Calu3 (cell line): ENCODE measurements at regions of chr10 and their contacts with region 1.

Region 1: DNA sequence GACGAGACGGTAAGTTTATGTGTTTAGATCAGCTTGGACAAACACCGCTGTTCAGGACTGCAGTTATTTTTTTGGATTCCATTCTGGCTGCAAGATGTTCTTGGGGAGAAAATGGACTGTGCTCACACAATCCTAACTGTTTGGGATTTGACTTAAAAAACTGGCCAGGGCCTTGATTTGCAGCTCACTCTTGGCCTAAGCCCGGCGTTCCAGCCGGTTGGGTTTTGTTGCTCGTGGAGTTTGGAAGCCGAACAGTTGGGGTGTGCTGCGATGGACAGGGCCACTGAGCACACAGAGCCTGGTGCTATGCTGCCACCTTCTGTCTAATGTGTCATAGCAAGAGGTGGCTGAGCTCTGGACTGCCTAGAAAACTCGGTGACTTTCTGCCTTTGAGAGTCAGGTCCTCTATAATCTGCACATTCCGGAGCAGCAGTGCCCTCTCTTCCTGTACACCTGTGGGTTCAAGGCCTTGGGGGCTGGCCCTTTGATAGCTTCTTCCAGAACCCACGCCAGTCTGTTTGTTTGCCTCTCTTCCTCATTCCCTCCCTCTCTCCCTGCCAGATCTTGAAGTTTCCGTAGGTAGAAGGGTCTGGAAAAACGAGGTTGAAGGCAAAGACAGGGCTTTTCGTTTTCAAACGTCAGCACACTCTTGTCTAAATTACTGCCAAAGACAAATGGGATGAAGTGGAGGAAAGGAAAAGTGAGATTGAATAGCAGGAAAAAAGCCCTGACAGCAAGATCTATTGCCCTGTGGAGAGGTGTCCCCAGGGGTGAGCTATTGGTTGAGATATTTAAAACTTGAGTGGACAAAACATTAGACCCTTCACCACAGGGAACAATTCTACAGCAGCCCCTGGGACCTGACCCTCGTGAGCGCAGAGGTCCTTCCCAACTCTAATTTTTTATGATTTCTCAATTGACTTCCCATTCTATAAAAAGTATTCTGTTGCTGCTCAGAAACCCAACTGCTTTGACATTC is 167.5 kb upstream of the HABP2 start:
- DNase-seq: peak; percentile 66
- H3K4me3 Mint-ChIP-seq: no peak overlapping the region
- H3K27ac Mint-ChIP-seq: no peak overlapping the region
- H3K4me1 Mint-ChIP-seq: peaks cover 16% of the 10 kb centered on the region
- H3K27me3 Mint-ChIP-seq: peaks cover 12% of the 10 kb centered on the region
- CTCF ChIP-seq: peak; percentile 61

Region 2: GRCh38 chr10:112471878-112472487 is 913.3 kb before region 1 on chr10:
- CTCF ChIA-PET with region 1: interaction called, 10 read pairs
- intact Hi-C with region 1: loop called (anchors 1 kb)
- DNase-seq: no peak
- H3K4me3 Mint-ChIP-seq: no peak overlapping the region
- H3K27ac Mint-ChIP-seq: no peak overlapping the region
- H3K4me1 Mint-ChIP-seq: no peaks in the 10 kb centered on the region
- H3K27me3 Mint-ChIP-seq: no peaks in the 10 kb centered on the region
- CTCF ChIP-seq: peak; percentile 36

Region 3: DNA sequence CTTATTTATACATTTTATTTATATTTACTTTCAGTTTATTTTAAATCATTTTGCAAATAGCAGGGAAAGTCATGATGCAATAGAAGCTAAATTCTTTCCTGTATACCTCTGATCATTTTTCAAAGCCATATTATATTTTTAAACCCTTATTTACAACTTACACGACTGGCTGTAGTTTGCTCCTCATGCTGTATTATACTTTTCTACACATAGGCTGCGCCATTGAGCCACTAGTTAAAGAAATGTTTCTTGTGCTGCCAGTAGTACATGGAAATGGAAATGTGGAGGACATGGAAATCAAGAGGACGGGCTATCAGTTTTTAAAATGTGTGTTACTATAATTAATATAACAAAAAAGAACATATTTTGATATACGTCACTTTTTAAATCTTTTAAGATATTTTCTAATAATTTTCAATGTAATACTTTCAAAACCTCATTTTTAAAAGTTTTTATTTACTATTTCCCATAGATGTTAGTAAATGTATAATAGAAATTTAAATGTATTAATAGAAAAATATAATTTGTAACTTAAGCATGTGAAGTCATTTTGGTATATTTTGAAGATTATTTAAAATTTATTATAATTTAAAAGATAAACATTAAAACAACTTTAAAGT is 819.8 kb before region 1 on chr10:
- CTCF ChIA-PET with region 1: no interaction called
- intact Hi-C with region 1: loop called (anchors 5 kb)
- DNase-seq: peak; percentile 49
- H3K4me3 Mint-ChIP-seq: no peak overlapping the region
- H3K27ac Mint-ChIP-seq: no peak overlapping the region
- H3K4me1 Mint-ChIP-seq: no peaks in the 10 kb centered on the region
- H3K27me3 Mint-ChIP-seq: no peaks in the 10 kb centered on the region
- CTCF ChIP-seq: no peak

Region 4: GRCh38 chr10:112949875-112950507 is 435.3 kb before region 1 on chr10 and contains the start of gene TCF7L2:
- CTCF ChIA-PET with region 1: no interaction called
- intact Hi-C with region 1: loop called (anchors 10 kb)
- DNase-seq: peak; percentile 91
- H3K4me3 Mint-ChIP-seq: peak within 1 kb of the TSS; percentile 80
- H3K27ac Mint-ChIP-seq: peak within 1 kb of the TSS; percentile 94
- H3K4me1 Mint-ChIP-seq: peaks cover 26% of the 10 kb centered on the region
- H3K27me3 Mint-ChIP-seq: no peaks in the 10 kb centered on the region
- CTCF ChIP-seq: no peak
- total RNA-seq, gene TCF7L2: 36.6 and 43.0 TPM in 2 replicates

Region 5: GRCh38 chr10:113216102-113216501 is 169.2 kb before region 1 on chr10:
- CTCF ChIA-PET with region 1: no interaction called
- intact Hi-C with region 1: loop called (anchors 5 kb)
- DNase-seq: no peak
- H3K4me3 Mint-ChIP-seq: no peak overlapping the region
- H3K27ac Mint-ChIP-seq: no peak overlapping the region
- H3K4me1 Mint-ChIP-seq: no peaks in the 10 kb centered on the region
- H3K27me3 Mint-ChIP-seq: no peaks in the 10 kb centered on the region
- CTCF ChIP-seq: no peak

Region 6: GRCh38 chr10:113550365-113550764 is 165.1 kb after region 1 on chr10:
- CTCF ChIA-PET with region 1: no interaction called
- intact Hi-C with region 1: loop called (anchors 10 kb)
- DNase-seq: no peak
- H3K4me3 Mint-ChIP-seq: no peak overlapping the region
- H3K27ac Mint-ChIP-seq: no peak overlapping the region
- H3K4me1 Mint-ChIP-seq: peaks cover 37% of the 10 kb centered on the region
- H3K27me3 Mint-ChIP-seq: peaks cover 37% of the 10 kb centered on the region
- CTCF ChIP-seq: no peak